ENCODE measurements at regions of chr3 and their contacts with region 1.

Region 1: GRCh38 chr3:149480325-149481017 is 6.0 kb downstream of the TM4SF4 start:
- DNase-seq: peak; percentile 17 to 87
- H3K4me3 ChIP-seq: no peak overlapping the region
- H3K27ac ChIP-seq: peak overlapping the region; percentile 52 to 54
- H3K4me1 ChIP-seq: peaks cover 0 to 11% of the 10 kb centered on the region in 2 donors
- H3K27me3 ChIP-seq: no peaks in the 10 kb centered on the region
- CTCF ChIP-seq: peak; percentile 67 to 80 (median 79)

Region 2: DNA sequence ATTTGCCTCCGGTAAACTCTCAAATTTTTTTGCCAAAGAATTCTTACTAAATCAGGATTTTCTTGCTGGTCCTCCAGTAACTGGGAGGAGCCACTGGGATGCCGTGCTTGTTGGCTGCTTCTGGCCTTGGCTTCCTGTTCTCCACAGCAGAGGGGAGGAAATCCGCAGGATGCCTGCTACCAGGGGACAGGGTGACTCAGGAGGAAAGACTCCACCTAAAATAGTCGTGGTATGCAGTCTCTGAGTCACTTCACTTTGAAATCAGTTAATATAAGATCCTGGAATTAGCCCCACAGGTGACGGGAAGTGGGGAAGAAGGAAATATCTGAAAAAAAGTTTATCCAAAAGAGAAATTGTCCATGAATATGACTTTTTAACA is 140.6 kb before region 1 on chr3:
- intact Hi-C with region 1: no loop called
- DNase-seq: peak; percentile 65 to 96
- H3K4me3 ChIP-seq: no peak overlapping the region
- H3K27ac ChIP-seq: peak overlapping the region; percentile 72 to 78
- H3K4me1 ChIP-seq: peaks cover 0 to 17% of the 10 kb centered on the region in 2 donors
- H3K27me3 ChIP-seq: no peaks in the 10 kb centered on the region
- CTCF ChIP-seq: no peak

Region 3: DNA sequence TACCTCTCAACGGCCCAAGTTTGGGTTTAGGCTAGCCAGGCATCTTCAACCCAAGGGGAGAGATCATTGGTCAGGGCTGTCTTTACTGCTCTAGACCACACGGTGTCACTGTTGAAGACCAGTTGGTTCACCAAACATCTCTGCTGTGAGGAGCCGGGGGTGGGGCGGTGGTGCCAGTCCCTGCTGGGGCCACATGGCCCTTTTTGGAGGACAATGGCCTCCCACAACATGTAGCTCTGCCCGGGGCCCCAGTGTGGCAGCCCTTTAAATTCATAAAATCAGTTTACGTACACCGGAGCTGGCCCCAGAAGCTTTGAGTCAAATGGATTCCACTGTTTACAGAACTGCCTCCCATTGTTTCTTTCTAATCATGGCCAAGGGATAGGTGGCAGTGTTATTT is 127.9 kb before region 1 on chr3:
- intact Hi-C with region 1: loop called (anchors 2 kb)
- DNase-seq: no peak
- H3K4me3 ChIP-seq: no peak overlapping the region
- H3K27ac ChIP-seq: no peak overlapping the region
- H3K4me1 ChIP-seq: peaks cover 0 to 3% of the 10 kb centered on the region in 2 donors
- H3K27me3 ChIP-seq: no peaks in the 10 kb centered on the region
- CTCF ChIP-seq: peak; percentile 63 to 76 (median 66)

Region 4: DNA sequence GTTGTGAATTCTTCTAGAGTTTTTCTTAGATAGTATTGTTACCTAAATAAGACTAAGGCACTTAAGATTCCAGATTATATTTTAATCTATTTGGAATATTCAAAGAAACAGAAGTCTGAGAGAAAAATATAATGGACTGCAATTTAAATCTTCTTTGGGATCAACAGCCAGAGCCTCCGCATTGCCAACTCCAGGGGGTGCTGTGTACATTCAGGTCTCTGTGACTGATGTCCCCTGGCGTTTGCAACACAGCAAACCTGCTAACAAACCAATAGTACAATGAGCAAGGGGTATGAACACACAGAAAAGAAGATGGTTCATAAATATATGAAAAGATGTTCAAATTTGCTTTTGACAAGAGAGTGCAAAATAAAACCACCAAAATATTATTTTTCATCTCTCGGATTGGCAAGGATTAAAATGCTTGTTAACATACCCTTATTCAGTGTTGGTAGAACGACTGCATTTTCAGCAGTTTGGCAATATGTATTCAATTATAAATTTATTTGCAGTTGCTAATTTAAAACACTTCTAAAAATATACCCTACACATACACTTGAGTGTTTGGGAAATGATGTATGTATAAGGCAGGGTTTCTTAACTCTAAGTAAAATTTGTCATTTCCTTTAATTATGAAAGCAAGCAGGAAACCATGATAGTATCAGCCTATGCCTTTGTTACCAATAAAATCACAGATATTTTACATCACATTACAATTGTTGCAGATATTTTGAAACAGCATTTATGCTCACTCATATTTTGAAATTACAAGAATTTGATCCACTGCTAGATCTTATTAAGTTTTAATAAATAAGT is 86.9 kb before region 1 on chr3:
- intact Hi-C with region 1: loop called (anchors 1 kb)
- DNase-seq: peak in 1 of 2 donors; percentile 82
- H3K4me3 ChIP-seq: no peak overlapping the region
- H3K27ac ChIP-seq: peak overlapping the region in 1 of 2 donors; percentile 8
- H3K4me1 ChIP-seq: peaks cover 0 to 14% of the 10 kb centered on the region in 2 donors
- H3K27me3 ChIP-seq: no peaks in the 10 kb centered on the region
- CTCF ChIP-seq: peak; percentile 75 to 84 (median 76)

Measured in ascending aorta (tissue), 2 donors.